Left cardiac atrium (tissue), 4 donors: ENCODE measurements at regions of chr9 and their contacts with region 1.

Region 1: GRCh38 chr9:14347406-14348122 is 33.6 kb upstream of the NFIB start:
- DNase-seq: peak; percentile 75
- ATAC-seq: peak; percentile 48 to 50

Region 2: GRCh38 chr9:13648676-13649075 is 698.9 kb before region 1 on chr9:
- intact Hi-C with region 1: no loop called
- DNase-seq: no peak
- ATAC-seq: no peak

Region 3: GRCh38 chr9:14245901-14246525 is 101.6 kb before region 1 on chr9:
- intact Hi-C with region 1: no loop called
- DNase-seq: no peak
- ATAC-seq: no peak

Region 4: DNA sequence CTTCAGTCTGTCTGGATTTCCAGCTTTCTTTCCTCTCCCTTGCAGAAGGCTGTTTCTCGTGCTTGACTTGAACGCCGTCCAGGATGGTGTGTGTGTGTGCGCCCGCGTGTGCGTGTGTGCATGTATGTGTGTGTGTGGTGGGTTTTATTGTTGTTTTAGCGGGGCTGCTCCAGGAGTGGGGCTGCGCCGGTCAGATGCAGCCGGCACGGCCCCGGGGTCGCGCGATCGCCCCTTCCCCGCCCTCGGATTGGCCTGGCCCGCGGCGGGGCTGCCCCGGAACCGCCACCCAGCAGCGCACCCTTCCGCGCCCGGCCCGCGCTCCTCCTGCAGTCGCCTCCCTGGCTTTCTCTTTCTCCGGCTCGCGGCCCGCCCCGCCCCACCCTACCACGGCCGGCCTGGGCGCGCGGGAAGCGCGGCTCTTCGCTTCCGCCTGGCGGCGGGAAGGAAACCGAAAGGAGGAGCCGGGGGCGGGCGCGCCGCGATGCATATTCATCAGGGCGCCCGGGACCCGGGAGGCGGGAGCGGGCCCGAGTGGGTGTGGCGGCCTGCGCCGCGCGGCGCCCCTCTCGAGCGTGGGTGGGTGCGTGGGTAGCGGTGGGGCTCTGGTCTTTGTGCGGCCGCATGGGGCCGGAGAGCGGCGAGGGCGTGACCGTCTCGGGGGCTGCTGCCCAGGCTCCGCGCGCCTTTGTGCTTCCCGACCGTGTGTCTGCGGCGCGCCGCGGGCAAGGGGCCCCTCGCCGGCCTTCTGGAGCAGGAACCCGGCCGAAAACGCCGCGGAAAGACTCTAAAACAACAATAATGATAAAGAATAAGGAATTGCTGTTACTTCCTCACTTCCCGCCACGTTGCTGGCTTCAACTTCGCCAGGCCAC is 25.1 kb before region 1 on chr9:
- intact Hi-C with region 1: loop called in 1 of 2 experiments (anchors 2 kb)
- DNase-seq: peak; percentile 94
- ATAC-seq: peak; percentile 94 to 96

Region 5: DNA sequence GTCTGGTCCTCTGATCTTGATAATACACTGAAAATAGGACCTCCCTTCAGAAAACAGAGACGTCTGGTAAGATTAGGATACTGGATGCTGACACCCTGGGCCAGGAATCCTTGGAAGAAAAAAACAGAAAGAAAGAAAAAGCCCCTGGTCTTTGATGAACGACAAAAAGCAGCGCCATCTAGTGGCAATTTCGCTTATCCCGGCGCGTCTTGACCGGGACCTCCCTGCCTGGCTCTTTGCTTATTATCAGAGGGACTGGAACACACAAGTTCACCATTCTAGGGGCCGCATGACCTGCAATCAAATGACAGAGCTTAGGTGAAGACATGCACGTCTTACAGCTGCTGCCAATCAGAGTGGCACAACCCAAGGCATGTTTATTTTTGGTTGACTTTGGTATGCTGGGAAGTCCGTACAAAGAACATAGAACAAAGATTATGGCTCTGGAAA is 81.2 kb after region 1 on chr9:
- intact Hi-C with region 1: no loop called
- DNase-seq: peak; percentile 80
- ATAC-seq: peak; percentile 56 to 59

Region 6: DNA sequence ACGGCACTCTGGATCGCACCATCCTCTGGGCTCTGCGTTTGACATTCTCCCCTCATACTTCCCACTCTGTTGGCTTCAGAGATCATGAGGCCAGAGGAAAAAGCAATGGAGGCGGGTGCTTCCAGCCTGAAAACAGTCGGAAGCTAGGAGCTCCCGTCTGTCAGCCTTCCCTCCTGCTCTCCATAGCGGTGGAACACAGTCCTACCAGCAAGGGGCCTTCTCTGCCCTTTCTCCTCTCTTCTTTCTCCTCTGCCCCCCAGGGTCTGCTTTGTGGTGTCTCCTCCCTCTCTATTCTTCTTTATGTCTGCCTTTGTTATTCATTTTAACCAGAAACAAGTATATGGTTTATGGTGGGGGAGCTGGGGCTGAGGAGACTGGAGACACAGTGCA is 118.9 kb after region 1 on chr9:
- intact Hi-C with region 1: no loop called
- DNase-seq: no peak
- ATAC-seq: no peak